Heart right ventricle (tissue), 16 donors: ENCODE measurements at regions of chr14 and their contacts with region 1.

Region 1: DNA sequence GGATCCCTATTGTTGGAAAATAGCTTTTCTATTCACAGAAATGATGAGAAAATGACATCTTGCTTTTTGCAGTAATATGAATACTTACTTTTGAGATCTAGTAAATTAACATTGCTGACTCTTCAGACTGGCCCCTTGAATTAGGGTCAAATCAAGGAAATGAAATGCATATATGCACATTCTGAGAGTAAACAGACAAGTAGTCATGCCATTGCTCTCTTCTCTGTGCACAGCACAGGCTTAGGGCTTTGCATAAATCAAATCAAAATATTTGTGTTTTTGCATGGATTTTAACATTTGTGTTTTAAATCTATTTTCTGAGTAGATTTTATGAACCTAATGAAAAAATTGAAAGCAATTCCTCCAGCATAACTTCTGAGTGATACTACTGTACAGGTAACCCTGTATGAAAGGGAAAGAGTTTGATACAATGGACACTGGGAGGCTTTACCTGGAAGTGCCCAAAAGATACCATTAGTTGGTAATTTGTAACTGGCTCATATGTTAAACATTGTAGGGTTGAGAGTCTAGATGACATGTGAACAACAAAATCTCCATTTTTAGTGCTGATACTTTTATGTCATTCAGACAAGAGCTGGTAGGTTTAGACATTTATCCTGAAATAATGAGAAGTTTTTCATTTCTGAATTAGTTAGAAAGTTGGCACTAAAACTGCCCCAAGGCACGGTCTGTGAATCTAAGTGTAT is 280.2 kb upstream of the FBXO33 start:
- DNase-seq: no peak
- ATAC-seq: no peak
- H3K4me3 ChIP-seq: no peak overlapping the region
- H3K27ac ChIP-seq: no peak overlapping the region
- H3K4me1 ChIP-seq: no peaks in the 10 kb centered on the region
- H3K27me3 ChIP-seq: no peaks in the 10 kb centered on the region
- CTCF ChIP-seq: no peak

Region 2: GRCh38 chr14:39762576-39763401 is 50.3 kb after region 1 on chr14:
- intact Hi-C with region 1: loop called in 1 of 10 experiments (anchors 2 kb)
- DNase-seq: no peak
- ATAC-seq: no peak
- H3K4me3 ChIP-seq: no peak overlapping the region
- H3K27ac ChIP-seq: no peak overlapping the region
- H3K4me1 ChIP-seq: no peaks in the 10 kb centered on the region
- H3K27me3 ChIP-seq: no peaks in the 10 kb centered on the region
- CTCF ChIP-seq: no peak